ENCODE measurements at regions of chr1 and their contacts with region 1.

Region 1: DNA sequence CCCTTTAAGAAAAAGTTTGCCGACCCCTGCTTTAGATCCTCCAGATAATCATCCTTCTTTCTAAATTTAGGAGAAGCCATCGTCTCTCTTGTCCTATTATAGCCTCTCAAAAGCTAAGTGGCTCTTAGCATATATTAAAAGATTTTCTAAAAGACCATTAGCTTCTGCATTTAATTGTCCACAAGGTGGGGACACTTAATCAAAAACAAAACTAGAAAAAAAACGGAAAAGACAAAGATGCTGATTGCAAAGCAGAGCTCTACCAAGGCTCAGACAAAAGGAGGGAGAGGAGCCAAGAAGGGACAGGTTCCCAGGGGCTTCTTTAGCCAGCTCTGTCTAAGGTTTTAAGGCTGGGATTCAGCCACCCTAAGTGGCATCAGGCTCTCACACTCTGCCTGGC is 128.3 kb upstream of the HMGB4 start:
- DNase-seq: no peak
- H3K4me3 Mint-ChIP-seq: no peak overlapping the region
- H3K27ac Mint-ChIP-seq: no peak overlapping the region
- H3K4me1 Mint-ChIP-seq: no peaks in the 10 kb centered on the region
- H3K27me3 Mint-ChIP-seq: peaks cover 15% of the 10 kb centered on the region

Region 2: GRCh38 chr1:34162852-34163766 is 427.5 kb after region 1 on chr1:
- CTCF ChIA-PET with region 1: no interaction called
- intact Hi-C with region 1: loop called (anchors 10 kb)
- DNase-seq: peak; percentile 55
- H3K4me3 Mint-ChIP-seq: peak overlapping the region; percentile 51
- H3K27ac Mint-ChIP-seq: no peak overlapping the region
- H3K4me1 Mint-ChIP-seq: peaks cover 10% of the 10 kb centered on the region
- H3K27me3 Mint-ChIP-seq: peaks cover 58% of the 10 kb centered on the region